ENCODE measurements at regions of chr3 and their contacts with region 1.

Region 1: DNA sequence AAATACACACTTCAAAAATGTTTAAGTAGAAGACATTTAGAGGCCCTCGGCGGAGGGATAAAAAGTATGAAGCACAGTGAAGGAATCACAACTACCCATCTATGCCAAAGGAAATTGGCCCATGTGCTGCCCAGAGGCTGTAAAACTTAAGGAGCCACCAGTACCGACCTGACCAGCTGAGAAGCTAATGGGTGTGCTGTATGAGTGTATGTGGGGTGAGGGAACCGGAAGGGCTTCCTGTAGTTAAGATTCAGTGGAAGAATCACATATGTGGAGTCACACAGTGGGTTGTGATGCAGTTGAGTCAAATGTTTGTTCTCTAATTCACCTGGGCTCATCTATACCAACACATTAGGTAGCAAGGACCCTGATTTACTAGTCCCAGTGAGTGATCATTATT is 516.0 kb upstream of the IL12A start:
- DNase-seq: no peak
- H3K4me3 ChIP-seq: no peak overlapping the region
- H3K4me3 Mint-ChIP-seq: no peak overlapping the region
- H3K27ac Mint-ChIP-seq: no peak overlapping the region
- H3K4me1 ChIP-seq: no peaks in the 10 kb centered on the region
- H3K4me1 Mint-ChIP-seq: no peaks in the 10 kb centered on the region
- H3K27me3 ChIP-seq: no peaks in the 10 kb centered on the region
- H3K27me3 Mint-ChIP-seq: peaks cover 5% of the 10 kb centered on the region
- CTCF ChIP-seq: no peak

Region 2: DNA sequence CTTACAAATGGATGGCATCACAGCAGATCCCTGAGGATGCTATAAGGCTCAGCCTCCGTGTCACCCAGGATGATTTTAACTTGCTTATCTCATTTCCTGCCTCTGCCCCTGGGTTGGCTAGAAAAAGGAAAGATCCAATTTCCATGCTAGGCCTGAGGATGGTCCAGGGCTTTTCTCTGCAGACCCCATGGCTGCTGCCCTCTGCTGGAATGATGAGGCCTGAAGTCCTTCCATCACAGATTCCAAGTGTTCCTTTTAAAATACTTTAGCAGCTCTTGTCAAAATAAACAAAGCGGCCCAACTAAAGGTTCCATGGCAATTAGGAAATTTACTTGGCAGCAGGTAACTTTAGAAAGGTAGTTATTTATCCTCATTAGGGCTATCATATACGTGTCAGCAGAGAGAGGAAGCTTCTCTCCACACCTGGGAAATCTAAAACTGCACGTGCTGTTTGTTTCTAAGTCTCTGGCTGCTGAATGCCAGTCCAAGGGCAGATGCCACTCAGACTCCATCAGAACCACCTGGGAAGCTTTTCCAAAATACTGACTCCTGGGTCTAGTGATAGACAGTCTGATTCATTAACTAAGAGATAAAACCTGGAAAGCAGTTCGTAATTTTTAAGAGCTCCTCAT is 114.1 kb after region 1 on chr3:
- CTCF ChIA-PET with region 1: no interaction called
- POLR2A ChIA-PET with region 1: no interaction called
- intact Hi-C with region 1: loop called (anchors 10 kb)
- DNase-seq: peak in 1 of 2 experiments; percentile 54
- H3K4me3 ChIP-seq: no peak overlapping the region
- H3K4me3 Mint-ChIP-seq: no peak overlapping the region
- H3K27ac Mint-ChIP-seq: no peak overlapping the region
- H3K4me1 ChIP-seq: peaks cover 32% of the 10 kb centered on the region
- H3K4me1 Mint-ChIP-seq: peaks cover 18% of the 10 kb centered on the region
- H3K27me3 ChIP-seq: no peaks in the 10 kb centered on the region
- H3K27me3 Mint-ChIP-seq: peaks cover 3% of the 10 kb centered on the region
- CTCF ChIP-seq: peak; percentile 54 to 72

Measured in Caco-2 (cell line).